Naive thymus-derived CD4-positive, alpha-beta T cell (primary cell): ENCODE measurements at regions of chr7 and their contacts with region 1.

Region 1: GRCh38 chr7:32204361-32205018 is 134.3 kb upstream of the PDE1C start:
- DNase-seq: no peak
- ATAC-seq: no peak
- H3K4me3 ChIP-seq: no peak overlapping the region
- H3K4me3 Mint-ChIP-seq: no peak overlapping the region
- H3K27ac ChIP-seq: no peak overlapping the region
- H3K27ac Mint-ChIP-seq: no peak overlapping the region
- H3K4me1 ChIP-seq: no peaks in the 10 kb centered on the region
- H3K4me1 Mint-ChIP-seq: no peaks in the 10 kb centered on the region
- H3K27me3 ChIP-seq: no peaks in the 10 kb centered on the region
- H3K27me3 Mint-ChIP-seq: peaks cover 0 to 17% (median 9%) of the 10 kb centered on the region in 5 donors

Region 2: DNA sequence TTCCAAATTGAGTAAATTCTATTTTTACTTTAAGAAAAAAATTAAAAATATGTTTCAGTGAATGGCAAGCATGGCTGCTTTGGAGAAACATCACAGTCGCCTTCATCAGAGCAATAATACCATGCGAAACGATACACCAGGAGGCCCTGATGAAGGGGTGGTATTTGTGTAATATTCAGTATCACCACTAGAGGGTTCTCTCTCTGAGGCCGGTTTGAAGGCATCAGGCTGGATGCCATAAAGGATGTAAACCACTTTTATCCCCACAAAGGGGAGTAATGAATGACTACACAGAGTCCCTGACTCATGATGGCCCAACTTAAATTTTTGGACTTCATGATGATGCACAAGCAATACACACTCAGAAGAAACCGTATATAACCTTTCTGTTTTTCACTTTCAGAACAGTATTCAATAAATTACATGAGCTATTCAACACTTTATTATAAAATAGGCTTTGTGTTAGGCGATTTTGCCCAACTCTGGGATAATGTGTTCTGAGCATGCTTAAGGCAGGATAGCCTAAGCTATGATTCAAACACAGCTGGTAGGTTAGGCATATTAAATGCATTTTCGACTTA is 422.0 kb before region 1 on chr7:
- CTCF ChIA-PET with region 1: no interaction called
- POLR2A ChIA-PET with region 1: no interaction called
- intact Hi-C with region 1: loop called in 1 of 2 experiments (anchors 5 kb)
- DNase-seq: no peak
- ATAC-seq: peak; percentile 70
- H3K4me3 ChIP-seq: no peak overlapping the region
- H3K4me3 Mint-ChIP-seq: no peak overlapping the region
- H3K27ac ChIP-seq: no peak overlapping the region
- H3K27ac Mint-ChIP-seq: no peak overlapping the region
- H3K4me1 ChIP-seq: no peaks in the 10 kb centered on the region
- H3K4me1 Mint-ChIP-seq: no peaks in the 10 kb centered on the region
- H3K27me3 ChIP-seq: no peaks in the 10 kb centered on the region
- H3K27me3 Mint-ChIP-seq: no peaks in the 10 kb centered on the region